A549 (cell line): ENCODE measurements at regions of chr21 and their contacts with region 1.

Region 1: GRCh38 chr21:36429947-36430546 is 44.9 kb downstream of the CHAF1B start:
- DNase-seq: peak; percentile 92 to 95
- ATAC-seq: peak; percentile 93 to 98
- H3K4me3 ChIP-seq: peak overlapping the region; percentile 50
- H3K27ac ChIP-seq: peak overlapping the region; percentile 93 to 95
- H3K4me1 ChIP-seq: peaks cover 48% of the 10 kb centered on the region
- CTCF ChIP-seq: no peak
- EP300 ChIP-seq: peak; percentile 37 to 54; a peak in 2 of 5 replicates
- POLR2A ChIP-seq: peak; percentile 51
- RAD21 ChIP-seq: peak; percentile 7 to 22; a peak in 1 of 5 replicates

Region 2: DNA sequence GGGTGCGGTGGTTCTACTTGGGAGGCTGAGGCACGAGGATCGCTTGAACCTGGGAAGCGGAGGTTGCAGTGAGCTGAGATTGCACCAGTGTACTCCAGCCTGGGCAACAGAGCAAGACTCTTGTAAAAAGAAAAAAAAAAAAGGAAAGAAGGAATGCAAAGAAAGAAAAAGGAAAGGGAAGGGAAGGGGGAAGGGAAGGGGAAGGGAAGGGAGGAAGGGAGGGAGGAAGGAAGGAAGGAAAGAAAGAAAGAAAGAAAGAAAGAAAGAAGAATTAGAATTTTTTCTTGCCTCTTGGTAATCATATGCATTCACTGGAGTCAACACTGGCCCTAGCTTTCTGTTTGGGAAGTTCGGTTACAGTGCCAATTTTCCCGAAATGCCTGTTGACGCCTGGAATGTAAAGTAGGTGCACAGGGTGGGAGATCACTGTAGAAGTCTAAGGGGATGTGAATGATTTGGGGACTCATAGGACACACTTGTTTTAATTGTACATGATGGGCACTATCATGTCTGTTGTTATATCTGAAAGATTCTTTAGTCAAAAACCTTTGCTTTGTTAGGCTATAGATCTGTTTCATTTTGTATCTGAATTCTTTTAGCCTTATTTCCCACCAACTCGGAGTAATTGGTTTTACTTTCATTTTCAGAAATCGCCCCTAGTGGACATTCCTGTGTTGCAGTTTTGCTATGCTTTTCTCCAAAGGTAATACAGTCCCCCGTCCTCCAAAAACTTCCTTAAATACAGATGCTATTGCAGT is 169.8 kb before region 1 on chr21:
- CTCF ChIA-PET with region 1: no interaction called
- POLR2A ChIA-PET with region 1: no interaction called
- DNase-seq: peak; percentile 40 to 46
- ATAC-seq: peak; percentile 78 to 89
- H3K4me3 ChIP-seq: peak overlapping the region; percentile 48
- H3K27ac ChIP-seq: peak overlapping the region; percentile 58 to 82; a peak in 5 of 6 replicates
- H3K4me1 ChIP-seq: no peaks in the 10 kb centered on the region
- CTCF ChIP-seq: peak; percentile 48
- EP300 ChIP-seq: no peak
- POLR2A ChIP-seq: no peak
- RAD21 ChIP-seq: peak in 1 of 2 experiments; percentile 15; a peak in 2 of 5 replicates

Region 3: GRCh38 chr21:36419996-36420395 is 10.1 kb before region 1 on chr21:
- CTCF ChIA-PET with region 1: interaction called, 18 read pairs
- POLR2A ChIA-PET with region 1: no interaction called
- DNase-seq: peak; percentile 84 to 91
- ATAC-seq: peak; percentile 92 to 95
- H3K4me3 ChIP-seq: no peak overlapping the region
- H3K27ac ChIP-seq: peak overlapping the region; percentile 47 to 67; a peak in 4 of 6 replicates
- H3K4me1 ChIP-seq: peaks cover 13% of the 10 kb centered on the region
- CTCF ChIP-seq: peak; percentile 67
- EP300 ChIP-seq: no peak
- POLR2A ChIP-seq: no peak
- RAD21 ChIP-seq: peak; percentile 77 to 82

Region 4: DNA sequence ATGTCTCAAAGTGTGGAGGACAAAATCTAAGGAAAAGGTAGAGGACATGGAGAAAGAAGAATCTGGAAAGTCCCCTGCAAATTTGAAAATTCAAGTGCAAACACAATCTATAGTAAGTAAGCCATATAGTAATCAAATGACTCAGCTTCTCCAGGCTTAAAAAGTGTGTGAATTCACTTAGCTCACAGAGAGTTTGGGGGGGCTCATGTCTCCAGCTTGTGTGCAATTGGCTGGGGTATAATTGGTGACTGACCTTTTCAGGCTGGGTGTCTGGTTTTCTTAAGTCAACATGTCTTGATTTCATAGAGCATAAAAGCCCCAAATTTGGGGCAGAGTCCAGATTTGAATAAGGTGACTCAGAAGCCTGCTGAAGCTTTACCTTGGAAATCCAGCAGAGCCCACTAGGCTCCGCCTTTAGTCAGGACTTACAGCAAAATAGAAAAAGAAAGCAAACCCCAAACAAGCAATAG is 41.2 kb after region 1 on chr21:
- CTCF ChIA-PET with region 1: no interaction called
- POLR2A ChIA-PET with region 1: interaction called, 14 read pairs
- DNase-seq: peak; percentile 58 to 89
- ATAC-seq: peak; percentile 88 to 93
- H3K4me3 ChIP-seq: no peak overlapping the region
- H3K27ac ChIP-seq: peak overlapping the region; percentile 70 to 88
- H3K4me1 ChIP-seq: peaks cover 23% of the 10 kb centered on the region
- CTCF ChIP-seq: no peak
- EP300 ChIP-seq: peak; percentile 32 to 55; a peak in 1 of 5 replicates
- POLR2A ChIP-seq: no peak
- RAD21 ChIP-seq: no peak; a peak in 1 of 5 replicates

Region 5: DNA sequence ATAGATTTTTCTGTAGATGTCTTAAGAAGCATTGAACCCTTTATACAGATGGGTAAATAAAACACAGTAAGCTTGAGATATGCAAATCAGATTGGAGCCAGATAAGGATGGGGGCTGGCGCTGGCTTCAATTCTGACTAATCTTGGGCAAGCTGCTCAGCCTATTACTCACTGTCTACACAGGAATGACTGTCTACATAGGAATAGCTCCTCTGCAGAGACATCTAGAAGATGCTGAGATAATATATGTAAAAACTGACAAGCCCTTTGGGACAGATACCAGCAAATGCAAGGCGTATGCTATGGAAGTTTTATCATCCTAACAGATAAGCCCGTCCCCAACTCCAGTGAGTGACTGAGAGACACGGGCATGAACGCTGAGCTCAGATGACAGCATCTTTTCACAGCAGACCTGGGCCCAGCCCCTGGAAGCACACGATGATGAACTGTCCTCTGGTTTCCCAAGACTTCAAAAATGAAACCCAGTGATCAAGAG is 48.2 kb after region 1 on chr21:
- CTCF ChIA-PET with region 1: interaction called, 3 read pairs
- POLR2A ChIA-PET with region 1: interaction called, 64 read pairs
- DNase-seq: peak; percentile 73 to 86
- ATAC-seq: peak; percentile 95
- H3K4me3 ChIP-seq: no peak overlapping the region
- H3K27ac ChIP-seq: peak overlapping the region; percentile 87 to 94
- H3K4me1 ChIP-seq: peaks cover 37% of the 10 kb centered on the region
- CTCF ChIP-seq: no peak
- EP300 ChIP-seq: peak; percentile 33 to 50; a peak in 2 of 5 replicates
- POLR2A ChIP-seq: no peak
- RAD21 ChIP-seq: no peak